AG04450 (cell line): ENCODE measurements at regions of chr2 and their contacts with region 1.

Region 1: GRCh38 chr2:33022989-33023727 is 76.4 kb downstream of the LTBP1 start:
- DNase-seq: peak; percentile 72
- H3K4me3 ChIP-seq: no peak overlapping the region
- H3K27ac ChIP-seq: peak overlapping the region; percentile 60
- H3K27me3 ChIP-seq: no peaks in the 10 kb centered on the region
- CTCF ChIP-seq: no peak

Region 2: DNA sequence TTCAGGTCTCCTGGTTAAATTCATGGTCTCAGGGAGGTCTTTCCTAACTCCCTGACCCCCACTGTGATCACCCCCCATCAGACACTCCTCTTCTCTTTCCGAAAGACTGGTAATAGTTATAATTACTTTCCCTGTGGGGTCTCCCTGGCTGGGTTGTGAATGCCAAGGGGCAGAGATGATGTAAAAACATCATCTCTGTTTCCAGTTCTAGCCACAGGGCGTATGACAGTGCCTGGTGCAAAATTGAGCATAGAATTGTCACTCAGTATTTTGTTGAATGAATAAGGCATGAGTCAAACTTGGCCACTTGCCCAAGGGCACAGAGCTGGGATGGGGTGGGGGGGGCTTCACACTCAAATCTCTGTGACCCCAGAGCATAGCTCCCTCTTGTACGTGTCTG is 11.2 kb before region 1 on chr2:
- CTCF ChIA-PET with region 1: no interaction called
- POLR2A ChIA-PET with region 1: no interaction called
- DNase-seq: no peak
- H3K4me3 ChIP-seq: no peak overlapping the region
- H3K27ac ChIP-seq: no peak overlapping the region
- H3K27me3 ChIP-seq: no peaks in the 10 kb centered on the region
- CTCF ChIP-seq: no peak

Region 3: GRCh38 chr2:33033606-33034081 is 10.5 kb after region 1 on chr2:
- CTCF ChIA-PET with region 1: interaction called, 19 read pairs
- POLR2A ChIA-PET with region 1: no interaction called
- DNase-seq: peak; percentile 15
- H3K4me3 ChIP-seq: peak overlapping the region; percentile 48
- H3K27ac ChIP-seq: no peak overlapping the region
- H3K27me3 ChIP-seq: no peaks in the 10 kb centered on the region
- CTCF ChIP-seq: peak; percentile 67

Region 4: GRCh38 chr2:33134086-33134771 is 111.1 kb after region 1 on chr2:
- CTCF ChIA-PET with region 1: no interaction called
- POLR2A ChIA-PET with region 1: interaction called, 14 read pairs
- DNase-seq: peak; percentile 98
- H3K4me3 ChIP-seq: peak overlapping the region; percentile 78
- H3K27ac ChIP-seq: peak overlapping the region; percentile 98
- H3K27me3 ChIP-seq: no peaks in the 10 kb centered on the region
- CTCF ChIP-seq: peak; percentile 42